HEK293 (cell line): ENCODE measurements at regions of chr9 and their contacts with region 1.

Region 1: DNA sequence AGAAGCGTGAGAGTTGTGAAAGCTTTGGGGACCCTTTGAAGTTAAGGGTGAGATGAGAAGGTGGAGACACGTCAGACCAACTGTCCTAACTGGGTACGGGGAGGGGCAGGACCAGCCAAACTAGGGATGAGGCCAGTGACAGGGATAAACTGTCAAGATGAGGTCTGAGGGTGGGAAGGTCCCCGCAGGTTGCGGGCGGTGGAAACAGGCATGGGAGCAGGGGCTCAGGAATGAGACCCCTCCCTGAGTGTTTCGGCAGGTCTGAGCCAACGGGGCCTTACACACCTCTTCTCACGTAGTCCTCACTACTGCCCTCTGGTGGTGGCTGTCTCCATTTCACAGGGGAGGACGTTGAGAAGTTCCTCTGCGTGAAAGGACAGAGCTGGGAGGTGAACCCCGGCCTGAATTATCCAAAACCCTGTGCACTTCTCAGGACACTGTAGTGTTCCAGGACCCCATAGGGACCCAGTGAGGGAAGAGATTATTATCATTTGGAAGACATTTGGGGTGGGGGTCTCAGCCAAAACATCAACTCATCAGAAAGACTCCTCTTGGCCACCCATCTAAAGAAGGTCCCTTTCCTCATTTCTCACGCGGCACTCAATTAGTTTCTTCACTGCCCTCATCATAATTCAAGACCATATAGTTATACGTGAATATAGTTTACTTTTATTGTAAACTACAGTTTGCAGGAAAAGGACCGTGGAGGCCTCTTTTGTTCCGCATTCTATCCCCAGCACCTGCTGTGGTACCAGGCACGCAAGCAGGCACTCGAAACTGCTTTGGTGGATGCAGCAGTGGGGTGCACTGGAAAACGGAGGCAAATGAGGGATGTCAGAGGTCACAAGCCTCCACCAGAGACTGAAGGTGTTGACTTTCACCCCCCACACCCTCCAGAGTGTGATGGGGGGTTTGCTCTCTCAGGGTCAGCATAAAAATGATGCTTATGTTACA is 21.7 kb upstream of the NANS start:
- H3K4me3 ChIP-seq: no peak overlapping the region
- H3K27ac ChIP-seq: no peak overlapping the region
- H3K4me1 ChIP-seq: no peaks in the 10 kb centered on the region
- CTCF ChIP-seq: peak; percentile 33; the same call in 1 of the 2 replicates

Region 2: DNA sequence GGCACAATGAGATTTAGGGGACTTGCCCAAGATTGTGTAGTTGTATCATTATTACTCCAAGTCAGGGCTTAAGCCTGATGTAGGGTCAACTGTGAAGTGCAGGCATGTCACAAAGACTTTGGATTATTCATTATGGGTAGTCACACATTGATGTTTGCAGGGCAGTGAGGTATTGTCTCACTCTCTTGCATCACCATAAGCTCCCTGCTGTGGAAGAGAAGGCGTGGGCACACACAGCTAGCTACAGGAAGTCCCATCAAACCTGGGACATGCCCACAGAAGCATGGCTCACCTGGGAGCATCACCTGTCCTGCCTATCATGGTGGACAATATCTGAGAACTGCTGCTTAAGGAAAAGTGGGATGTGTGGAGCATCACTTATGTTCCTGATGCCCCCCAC is 491.3 kb before region 1 on chr9:
- CTCF ChIA-PET with region 1: no interaction called
- POLR2A ChIA-PET with region 1: no interaction called
- H3K4me3 ChIP-seq: no peak overlapping the region
- H3K27ac ChIP-seq: no peak overlapping the region
- H3K4me1 ChIP-seq: no peaks in the 10 kb centered on the region
- CTCF ChIP-seq: no peak

Region 3: GRCh38 chr9:97615439-97616072 is 419.3 kb before region 1 on chr9:
- CTCF ChIA-PET with region 1: no interaction called
- POLR2A ChIA-PET with region 1: no interaction called
- H3K4me3 ChIP-seq: no peak overlapping the region
- H3K27ac ChIP-seq: no peak overlapping the region
- H3K4me1 ChIP-seq: no peaks in the 10 kb centered on the region
- CTCF ChIP-seq: 0 out of 2 replicates have a peak, but pooled peaks have one; percentile 43

Region 4: DNA sequence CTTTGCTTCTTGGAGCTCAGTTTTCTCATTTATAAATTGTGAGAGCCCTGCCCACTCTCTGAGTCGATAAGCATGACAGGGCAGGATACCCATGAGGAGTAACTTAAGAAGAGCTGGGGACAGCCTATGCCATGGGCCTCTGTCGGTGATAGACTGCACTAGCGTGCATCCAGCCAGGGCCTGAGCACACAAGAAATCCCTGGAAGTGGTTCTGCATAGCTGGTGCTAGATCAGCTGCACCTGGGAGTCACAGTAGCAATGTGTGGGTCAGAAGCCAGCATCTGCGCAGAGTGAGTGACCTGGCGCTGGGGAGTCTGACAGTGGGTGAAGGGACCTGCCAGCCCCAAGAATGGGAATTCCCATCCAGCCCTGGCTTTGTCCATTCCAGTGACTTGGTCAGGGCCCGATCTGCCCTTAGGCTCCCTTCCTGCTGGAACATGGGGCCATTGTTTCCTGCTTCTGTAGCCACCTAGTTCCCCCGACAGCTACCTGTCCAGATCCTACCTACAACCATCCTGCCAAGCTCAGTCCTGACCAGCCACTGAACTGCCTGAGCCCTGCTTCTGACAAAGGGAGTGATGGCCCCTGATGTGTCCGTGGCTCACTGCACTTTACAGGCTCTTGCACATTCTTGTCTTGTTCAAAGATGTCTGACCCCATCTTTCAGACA is 14.3 kb before region 1 on chr9:
- CTCF ChIA-PET with region 1: interaction called, 11 read pairs
- POLR2A ChIA-PET with region 1: interaction called, 6 read pairs
- H3K4me3 ChIP-seq: no peak overlapping the region
- H3K27ac ChIP-seq: no peak overlapping the region
- H3K4me1 ChIP-seq: no peaks in the 10 kb centered on the region
- CTCF ChIP-seq: no peak

Region 5: GRCh38 chr9:98045234-98046179 is 10.6 kb after region 1 on chr9:
- CTCF ChIA-PET with region 1: interaction called, 13 read pairs
- POLR2A ChIA-PET with region 1: no interaction called
- H3K4me3 ChIP-seq: no peak overlapping the region
- H3K27ac ChIP-seq: no peak overlapping the region
- H3K4me1 ChIP-seq: no peaks in the 10 kb centered on the region
- CTCF ChIP-seq: no peak

Region 6: DNA sequence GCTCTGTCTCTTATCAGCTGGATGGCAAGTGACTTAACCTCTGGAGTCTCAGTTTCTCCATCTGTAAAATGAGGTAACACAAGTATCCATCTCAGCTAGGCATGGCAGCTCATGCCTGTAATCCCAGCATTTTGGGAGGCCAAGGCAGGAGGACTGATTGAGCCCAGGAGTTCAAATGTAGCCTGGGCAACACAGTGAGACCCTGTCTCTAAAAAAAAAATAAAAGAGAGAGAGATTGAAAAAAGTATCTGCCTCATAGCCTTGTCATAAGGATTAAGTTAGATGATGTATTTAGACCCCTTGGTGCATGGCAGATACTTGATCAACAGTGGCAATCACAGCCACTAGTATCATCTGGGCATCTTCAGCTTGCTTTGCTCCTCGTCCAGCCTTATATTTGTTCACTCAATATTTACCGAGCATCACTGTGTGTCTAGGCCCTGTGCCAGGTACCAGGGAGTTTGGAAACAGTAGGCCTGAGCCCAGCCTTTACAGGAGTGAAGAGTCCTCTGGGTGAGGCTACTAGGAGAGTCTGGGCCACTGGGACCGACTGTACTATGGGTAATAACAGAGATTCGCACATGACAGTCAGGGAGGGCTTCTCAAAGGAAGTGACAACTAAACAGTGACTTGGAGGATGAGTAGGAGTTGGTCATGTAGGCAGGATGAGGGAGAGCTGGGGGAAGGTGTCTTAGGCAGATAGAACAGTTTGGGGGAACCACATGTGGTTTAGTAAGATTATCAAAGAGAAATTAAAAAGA is 123.4 kb after region 1 on chr9:
- CTCF ChIA-PET with region 1: no interaction called
- POLR2A ChIA-PET with region 1: no interaction called
- H3K4me3 ChIP-seq: no peak overlapping the region
- H3K27ac ChIP-seq: no peak overlapping the region
- H3K4me1 ChIP-seq: no peaks in the 10 kb centered on the region
- CTCF ChIP-seq: no peak

Region 7: GRCh38 chr9:98185611-98186171 is 150.8 kb after region 1 on chr9:
- CTCF ChIA-PET with region 1: no interaction called
- POLR2A ChIA-PET with region 1: no interaction called
- H3K4me3 ChIP-seq: no peak overlapping the region
- H3K27ac ChIP-seq: no peak overlapping the region
- H3K4me1 ChIP-seq: no peaks in the 10 kb centered on the region
- CTCF ChIP-seq: no peak